ENCODE measurements at regions of chr10 and their contacts with region 1.

Region 1: GRCh38 chr10:58291538-58292174 is 22.7 kb downstream of the CISD1 start:
- DNase-seq: peak; percentile 72
- H3K4me3 ChIP-seq: no peak overlapping the region
- H3K27ac ChIP-seq: no peak overlapping the region
- H3K4me1 ChIP-seq: no peaks in the 10 kb centered on the region
- H3K27me3 ChIP-seq: no peaks in the 10 kb centered on the region
- CTCF ChIP-seq: peak; percentile 55 to 57
- POLR2A ChIP-seq: no peak

Region 2: DNA sequence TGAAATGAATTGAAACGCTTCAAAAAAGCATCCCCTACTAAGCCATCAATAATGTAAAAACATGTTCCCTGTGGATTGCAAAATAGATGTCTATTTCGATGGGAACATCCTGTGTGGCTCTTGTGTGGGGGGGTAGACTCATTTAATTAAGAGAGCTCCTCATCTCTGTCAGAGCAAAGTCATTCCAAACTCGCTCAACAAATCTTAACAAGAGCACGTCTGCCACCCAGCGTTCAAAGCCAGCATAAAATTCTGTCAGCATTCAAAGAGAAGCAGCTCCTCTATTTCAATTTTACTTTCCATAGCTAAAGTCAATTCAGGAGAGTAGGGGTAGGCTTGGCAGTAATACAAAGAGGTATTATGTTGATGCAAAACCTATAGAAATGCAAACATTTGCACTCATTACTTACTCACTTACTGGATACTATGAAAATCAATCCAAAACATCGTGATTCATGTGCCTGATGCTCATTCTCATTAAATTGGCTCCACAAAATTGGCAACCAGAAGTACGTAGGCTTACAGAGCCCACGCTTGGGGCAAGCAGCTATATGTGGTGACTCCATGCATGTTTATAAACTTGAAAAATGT is 138.9 kb before region 1 on chr10:
- CTCF ChIA-PET with region 1: interaction called, 11 read pairs
- POLR2A ChIA-PET with region 1: no interaction called
- dilution Hi-C with region 1: no loop called
- intact Hi-C with region 1: no loop called
- DNase-seq: peak; percentile 26
- H3K4me3 ChIP-seq: no peak overlapping the region
- H3K27ac ChIP-seq: no peak overlapping the region
- H3K4me1 ChIP-seq: no peaks in the 10 kb centered on the region
- H3K27me3 ChIP-seq: no peaks in the 10 kb centered on the region
- CTCF ChIP-seq: peak; percentile 25 to 51
- POLR2A ChIP-seq: no peak

Region 3: GRCh38 chr10:58189269-58189668 is 102.4 kb before region 1 on chr10:
- CTCF ChIA-PET with region 1: interaction called, 17 read pairs
- POLR2A ChIA-PET with region 1: no interaction called
- dilution Hi-C with region 1: no loop called
- intact Hi-C with region 1: no loop called
- DNase-seq: no peak
- H3K4me3 ChIP-seq: no peak overlapping the region
- H3K27ac ChIP-seq: no peak overlapping the region
- H3K4me1 ChIP-seq: no peaks in the 10 kb centered on the region
- H3K27me3 ChIP-seq: peaks cover 0 to 2% of the 10 kb centered on the region in 2 experiments
- CTCF ChIP-seq: no peak
- POLR2A ChIP-seq: no peak

Region 4: GRCh38 chr10:58237014-58237830 is 54.4 kb before region 1 on chr10:
- CTCF ChIA-PET with region 1: interaction called, 13 read pairs
- POLR2A ChIA-PET with region 1: interaction called, 6 read pairs
- dilution Hi-C with region 1: no loop called
- intact Hi-C with region 1: loop called (anchors 2 kb)
- DNase-seq: peak; percentile 93
- H3K4me3 ChIP-seq: peak overlapping the region in 1 of 3 experiments; percentile 70
- H3K27ac ChIP-seq: peak overlapping the region; percentile 94
- H3K4me1 ChIP-seq: peaks cover 50% of the 10 kb centered on the region
- H3K27me3 ChIP-seq: no peaks in the 10 kb centered on the region
- CTCF ChIP-seq: no peak
- POLR2A ChIP-seq: no peak

Region 5: DNA sequence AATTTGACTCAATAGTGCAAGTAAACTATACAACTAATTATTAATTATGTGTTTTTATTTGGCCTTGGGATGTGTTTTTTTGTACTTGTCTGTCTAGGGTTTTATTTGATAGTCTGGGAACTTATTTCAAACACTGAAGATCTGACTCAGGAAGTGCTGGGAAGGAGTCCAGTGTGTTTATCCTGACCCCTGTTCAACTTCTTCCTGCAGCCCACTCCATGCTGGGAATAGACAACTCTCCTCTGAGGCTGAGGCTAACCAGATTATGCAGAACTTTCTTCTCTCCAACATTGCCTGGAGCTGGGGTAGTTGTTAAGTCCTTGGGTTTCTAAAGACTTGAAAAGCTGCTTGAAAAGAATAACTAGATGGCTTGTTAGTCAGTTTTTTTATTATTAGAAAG is 15.7 kb before region 1 on chr10:
- CTCF ChIA-PET with region 1: interaction called, 36 read pairs
- POLR2A ChIA-PET with region 1: no interaction called
- dilution Hi-C with region 1: no loop called
- intact Hi-C with region 1: no loop called
- DNase-seq: peak; percentile 71
- H3K4me3 ChIP-seq: no peak overlapping the region
- H3K27ac ChIP-seq: peak overlapping the region; percentile 10
- H3K4me1 ChIP-seq: peaks cover 47% of the 10 kb centered on the region
- H3K27me3 ChIP-seq: no peaks in the 10 kb centered on the region
- CTCF ChIP-seq: no peak
- POLR2A ChIP-seq: no peak

Region 6: DNA sequence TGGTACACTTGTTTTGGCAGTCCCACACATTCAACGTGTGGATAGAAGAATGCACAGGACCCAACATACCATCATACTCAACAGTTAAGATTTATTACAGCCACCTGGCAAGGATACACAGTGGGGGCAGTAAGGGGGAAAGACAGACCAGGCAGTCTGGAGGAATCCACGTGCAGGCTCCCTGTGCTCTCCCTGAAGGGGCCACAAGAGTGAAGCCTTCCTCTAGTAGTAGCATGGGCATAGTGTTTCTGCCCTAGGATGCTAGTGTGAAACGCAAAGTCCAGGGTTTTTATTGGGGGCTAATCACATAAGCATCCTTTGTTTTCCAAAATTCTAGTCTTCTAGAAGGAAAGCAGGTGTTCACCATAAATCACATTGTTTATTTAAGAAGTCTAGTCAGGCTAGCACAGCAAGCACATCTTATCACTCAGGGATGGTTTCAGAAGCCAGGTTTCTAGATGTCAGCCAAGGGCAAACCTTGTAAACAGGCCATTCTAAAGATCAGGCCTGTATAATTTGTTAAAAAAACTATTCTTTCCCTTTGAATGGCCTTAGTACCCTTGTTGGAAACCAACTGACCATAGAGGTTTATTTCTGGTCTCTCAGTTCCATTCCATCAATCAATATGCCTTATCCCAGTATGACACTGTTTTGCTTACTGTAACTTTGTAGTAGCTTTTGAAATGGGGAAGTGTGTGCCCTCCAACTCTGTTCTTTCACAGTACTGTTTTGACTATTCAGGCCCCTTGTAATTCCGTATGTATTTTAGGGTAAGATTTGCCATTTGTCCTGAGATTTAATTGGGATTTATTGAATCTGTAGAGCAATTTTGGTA is 81.2 kb after region 1 on chr10:
- CTCF ChIA-PET with region 1: no interaction called
- POLR2A ChIA-PET with region 1: no interaction called
- dilution Hi-C with region 1: no loop called
- intact Hi-C with region 1: no loop called
- DNase-seq: no peak
- H3K4me3 ChIP-seq: no peak overlapping the region
- H3K27ac ChIP-seq: no peak overlapping the region
- H3K4me1 ChIP-seq: no peaks in the 10 kb centered on the region
- H3K27me3 ChIP-seq: no peaks in the 10 kb centered on the region
- CTCF ChIP-seq: no peak
- POLR2A ChIP-seq: no peak